ENCODE measurements at regions of chr16 and their contacts with region 1.

Region 1: GRCh38 chr16:85821441-85822135 is 22.1 kb downstream of the COX4I1 start:
- DNase-seq: peak; percentile 70 to 79 (median 76)
- H3K4me3 ChIP-seq: no peak overlapping the region
- H3K27ac ChIP-seq: no peak overlapping the region
- H3K4me1 ChIP-seq: peaks cover 0 to 8% (median 0%) of the 10 kb centered on the region in 4 experiments
- H3K27me3 ChIP-seq: peaks cover 0 to 31% (median 5%) of the 10 kb centered on the region in 5 experiments

Region 2: GRCh38 chr16:85853547-85854545 is 32.3 kb after region 1 on chr16:
- CTCF ChIA-PET with region 1: interaction called, 10 read pairs
- POLR2A ChIA-PET with region 1: no interaction called
- DNase-seq: peak in 2 of 3 donors; percentile 26 to 27
- H3K4me3 ChIP-seq: peak overlapping the region in 1 of 7 experiments; percentile 4
- H3K27ac ChIP-seq: no peak overlapping the region
- H3K4me1 ChIP-seq: peaks cover 0 to 25% (median 7%) of the 10 kb centered on the region in 4 experiments
- H3K27me3 ChIP-seq: peaks cover 0 to 21% (median 2%) of the 10 kb centered on the region in 5 experiments

Region 3: GRCh38 chr16:85908444-85908843 is 86.9 kb after region 1 on chr16:
- CTCF ChIA-PET with region 1: interaction called, 11 read pairs
- POLR2A ChIA-PET with region 1: no interaction called
- DNase-seq: peak in 2 of 3 donors; percentile 52 to 66
- H3K4me3 ChIP-seq: no peak overlapping the region
- H3K27ac ChIP-seq: no peak overlapping the region
- H3K4me1 ChIP-seq: peaks cover 3 to 57% (median 9%) of the 10 kb centered on the region in 4 experiments
- H3K27me3 ChIP-seq: peaks cover 0 to 18% (median 0%) of the 10 kb centered on the region in 5 experiments

Region 4: DNA sequence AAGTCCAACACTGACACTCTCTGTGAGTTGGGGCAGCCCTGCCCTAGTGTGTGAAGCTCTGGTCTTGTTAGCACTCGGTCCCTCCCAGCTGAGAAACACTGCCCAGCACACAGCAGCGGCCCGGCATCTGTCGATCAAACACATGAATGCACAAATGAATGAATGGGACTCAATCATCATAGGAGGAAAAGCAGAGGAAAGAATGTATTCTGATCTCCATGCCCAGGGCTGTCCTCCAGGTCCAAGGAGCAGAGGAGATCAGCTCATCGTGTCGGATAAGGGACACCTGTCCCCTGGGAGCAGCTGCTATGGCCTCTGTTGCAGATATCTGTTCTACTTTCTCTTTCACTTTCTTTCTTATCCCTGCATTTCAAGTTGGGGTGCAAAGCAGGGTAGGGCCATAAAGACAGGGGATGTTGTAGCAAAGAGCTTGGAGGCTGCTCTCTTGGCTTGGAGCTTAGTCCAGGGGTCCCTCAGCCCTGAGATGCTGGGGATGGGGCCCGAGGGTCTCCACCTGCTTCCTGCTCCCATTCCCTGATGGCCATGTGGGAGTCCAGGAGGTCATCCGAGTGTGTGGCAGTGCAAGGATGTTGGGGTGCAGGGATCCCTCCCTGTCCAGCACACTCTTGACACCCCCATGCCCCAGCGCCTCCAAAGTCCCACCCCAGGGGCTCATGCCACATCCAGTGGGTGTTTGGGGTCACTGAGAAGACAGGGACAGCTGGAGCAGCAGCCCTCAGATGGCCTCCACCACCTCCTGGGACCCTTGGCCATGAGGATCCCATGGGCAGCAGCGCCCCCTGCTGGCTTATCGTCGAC is 165.6 kb after region 1 on chr16:
- CTCF ChIA-PET with region 1: interaction called, 210 read pairs
- POLR2A ChIA-PET with region 1: no interaction called
- DNase-seq: peak in 2 of 3 donors; percentile 28 to 45
- H3K4me3 ChIP-seq: no peak overlapping the region
- H3K27ac ChIP-seq: no peak overlapping the region
- H3K4me1 ChIP-seq: peaks cover 9 to 41% (median 33%) of the 10 kb centered on the region in 4 experiments
- H3K27me3 ChIP-seq: peaks cover 0 to 76% (median 16%) of the 10 kb centered on the region in 5 experiments

Region 5: GRCh38 chr16:85995541-85996423 is 174.2 kb after region 1 on chr16:
- CTCF ChIA-PET with region 1: interaction called, 210 read pairs
- POLR2A ChIA-PET with region 1: no interaction called
- DNase-seq: peak in 2 of 3 donors; percentile 33 to 45
- H3K4me3 ChIP-seq: peak overlapping the region in 2 of 7 experiments; percentile 38 to 49
- H3K27ac ChIP-seq: no peak overlapping the region
- H3K4me1 ChIP-seq: peaks cover 0 to 5% (median 0%) of the 10 kb centered on the region in 4 experiments
- H3K27me3 ChIP-seq: peaks cover 0 to 6% (median 0%) of the 10 kb centered on the region in 5 experiments

Region 6: GRCh38 chr16:86010680-86011141 is 189.1 kb after region 1 on chr16:
- CTCF ChIA-PET with region 1: interaction called, 60 read pairs
- POLR2A ChIA-PET with region 1: interaction called, 5 read pairs
- DNase-seq: no peak
- H3K4me3 ChIP-seq: no peak overlapping the region
- H3K27ac ChIP-seq: no peak overlapping the region
- H3K4me1 ChIP-seq: no peaks in the 10 kb centered on the region
- H3K27me3 ChIP-seq: peaks cover 0 to 10% (median under 1%) of the 10 kb centered on the region in 5 experiments

Region 7: DNA sequence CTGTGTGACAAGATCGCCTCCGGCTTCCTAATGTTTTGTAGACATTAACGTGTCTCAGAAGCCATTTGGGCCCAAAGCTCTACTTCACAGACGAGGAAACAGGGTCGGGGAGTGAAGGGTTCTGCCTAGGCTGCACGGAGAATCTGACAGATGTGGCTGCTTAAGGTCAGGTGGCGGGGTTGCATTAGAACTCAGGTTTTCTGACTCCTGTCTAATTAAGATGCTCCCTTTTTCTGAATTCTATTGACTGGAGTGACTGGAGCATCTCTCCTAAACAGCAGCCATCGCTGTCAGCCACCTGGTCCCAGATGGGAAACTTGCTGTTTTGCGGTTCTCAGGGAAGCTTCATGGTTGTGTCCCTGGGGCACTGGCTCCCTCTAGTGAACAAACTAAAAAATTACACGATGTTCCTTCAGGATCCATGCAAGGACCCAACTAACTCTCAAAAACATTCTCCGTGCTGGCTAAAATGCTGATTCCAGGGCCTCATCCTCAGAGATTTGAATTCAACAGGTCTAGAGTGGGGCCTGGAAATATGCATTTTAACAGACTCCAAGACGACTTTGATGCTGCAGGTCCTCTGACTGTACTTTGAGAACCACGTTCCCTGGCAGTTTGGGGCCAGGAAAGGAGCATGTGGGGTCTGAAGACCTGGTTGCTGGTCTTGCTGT is 194.7 kb after region 1 on chr16:
- CTCF ChIA-PET with region 1: interaction called, 60 read pairs
- POLR2A ChIA-PET with region 1: interaction called, 5 read pairs
- DNase-seq: peak; percentile 59 to 65 (median 65)
- H3K4me3 ChIP-seq: no peak overlapping the region
- H3K27ac ChIP-seq: no peak overlapping the region
- H3K4me1 ChIP-seq: peaks cover 4 to 16% (median 14%) of the 10 kb centered on the region in 4 experiments
- H3K27me3 ChIP-seq: peaks cover 0 to 27% (median 5%) of the 10 kb centered on the region in 5 experiments

Measured in common myeloid progenitor, CD34-positive (primary cell).